ENCODE measurements at regions of chr11 and their contacts with region 1.

Region 1: GRCh38 chr11:34357701-34358257 is at the start of gene ABTB2:
- DNase-seq: peak; percentile 99
- ATAC-seq: peak; percentile 95
- H3K4me3 Mint-ChIP-seq: peak within 1 kb of the TSS; percentile 78
- H3K27ac Mint-ChIP-seq: peak within 1 kb of the TSS; percentile 67
- H3K4me1 Mint-ChIP-seq: peaks cover 28% of the 10 kb centered on the region
- H3K27me3 Mint-ChIP-seq: peaks cover 36% of the 10 kb centered on the region
- total RNA-seq, gene ABTB2: 1.2 TPM

Region 2: DNA sequence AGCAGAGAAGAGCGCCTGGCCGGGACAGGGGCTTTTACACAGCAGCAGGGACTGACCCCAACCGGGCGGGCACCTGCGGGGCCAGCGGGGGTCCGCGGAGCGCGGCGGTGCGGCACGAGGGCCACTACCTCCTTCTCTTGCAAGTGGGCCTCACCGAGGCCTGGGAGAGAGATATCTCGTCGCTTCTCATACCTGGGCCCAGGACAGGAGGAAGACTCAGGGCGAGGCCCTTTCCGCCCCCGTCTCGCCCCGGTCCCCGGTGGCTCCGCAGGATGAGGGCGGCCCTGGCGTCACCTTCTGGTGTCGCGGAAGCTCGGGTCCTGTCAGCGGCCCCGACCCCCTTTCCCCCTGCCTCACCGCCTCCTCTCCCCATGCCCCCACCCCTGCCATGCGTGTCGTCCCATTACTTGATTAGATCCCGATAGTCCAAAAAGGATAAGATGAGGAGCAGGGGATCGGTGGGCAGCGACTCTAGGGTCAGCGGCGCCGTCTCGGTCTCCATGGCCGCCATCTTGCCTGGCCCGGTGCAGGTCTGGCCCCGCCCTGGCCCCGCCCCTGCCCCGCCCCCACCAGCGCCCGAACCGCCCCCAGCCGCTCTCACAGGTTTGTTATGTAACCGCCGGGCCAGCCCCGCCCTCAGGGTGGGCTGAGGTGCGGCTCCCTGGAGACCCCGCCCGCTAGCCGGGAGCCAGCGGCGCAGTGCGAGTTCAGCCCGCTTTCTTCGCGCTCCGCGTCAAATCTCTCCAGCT is 583.6 kb before region 1 on chr11 and contains the start of gene FBXO3:
- CTCF ChIA-PET with region 1: no interaction called
- POLR2A ChIA-PET with region 1: no interaction called
- intact Hi-C with region 1: loop called in 1 of 2 experiments (anchors 1 kb)
- DNase-seq: peak; percentile 87
- ATAC-seq: peak; percentile 85
- H3K4me3 Mint-ChIP-seq: peak within 1 kb of the TSS; percentile 89
- H3K27ac Mint-ChIP-seq: peak within 1 kb of the TSS; percentile 75
- H3K4me1 Mint-ChIP-seq: peaks cover 44% of the 10 kb centered on the region
- H3K27me3 Mint-ChIP-seq: peaks cover 12% of the 10 kb centered on the region
- total RNA-seq, gene FBXO3: 11.4 to 12.2 TPM

Region 3: GRCh38 chr11:33996498-33997454 is 361.0 kb before region 1 on chr11:
- CTCF ChIA-PET with region 1: interaction called, 8 read pairs
- POLR2A ChIA-PET with region 1: no interaction called
- intact Hi-C with region 1: loop called (anchors 1 kb)
- DNase-seq: peak; percentile 84
- ATAC-seq: peak; percentile 99
- H3K4me3 Mint-ChIP-seq: no peak overlapping the region
- H3K27ac Mint-ChIP-seq: no peak overlapping the region
- H3K4me1 Mint-ChIP-seq: peaks cover 9% of the 10 kb centered on the region
- H3K27me3 Mint-ChIP-seq: peaks cover 11% of the 10 kb centered on the region

Region 4: DNA sequence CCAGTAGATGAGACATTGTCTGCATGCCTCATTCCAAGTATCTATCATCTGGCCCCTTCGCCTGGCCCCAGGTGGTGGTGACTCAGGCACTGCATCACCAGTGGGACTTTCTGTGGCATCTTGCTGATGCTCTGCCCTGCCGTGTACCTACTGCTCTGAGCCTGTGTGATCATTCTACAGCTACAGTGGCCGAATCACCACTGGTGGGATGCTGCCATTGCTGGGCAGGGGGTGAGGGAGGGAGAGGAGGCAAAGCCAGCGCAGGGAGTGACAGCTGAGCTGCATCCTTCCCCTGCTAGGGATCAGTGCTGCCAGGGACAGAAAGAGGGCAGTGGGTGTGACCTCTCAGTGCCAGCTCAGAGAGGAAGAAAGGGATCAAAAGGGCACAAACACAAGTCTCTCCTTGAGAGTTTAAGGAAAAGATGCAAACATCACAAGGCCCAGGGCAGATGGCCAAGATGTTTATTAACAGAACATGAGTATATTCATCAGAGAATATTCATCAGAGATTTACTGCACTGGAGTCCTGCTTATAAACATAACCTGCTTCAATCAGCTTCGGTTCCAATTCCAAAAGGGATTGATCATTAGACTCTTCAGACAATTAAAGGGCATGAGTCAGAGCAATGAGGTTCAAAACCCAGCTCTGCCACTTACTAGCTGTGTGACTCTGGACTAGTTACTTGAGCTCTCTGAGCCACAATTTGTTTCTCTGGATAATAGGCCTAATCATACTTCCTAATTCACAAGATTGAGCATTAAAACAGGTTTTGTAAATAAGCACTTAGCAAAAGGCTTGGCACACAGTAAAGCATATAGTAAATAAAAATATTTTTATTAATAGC is 142.6 kb before region 1 on chr11:
- CTCF ChIA-PET with region 1: interaction called, 3 read pairs
- POLR2A ChIA-PET with region 1: no interaction called
- intact Hi-C with region 1: loop called in 1 of 2 experiments (anchors 1 kb)
- DNase-seq: peak; percentile 92
- ATAC-seq: peak; percentile 99
- H3K4me3 Mint-ChIP-seq: no peak overlapping the region
- H3K27ac Mint-ChIP-seq: peak overlapping the region; percentile 74
- H3K4me1 Mint-ChIP-seq: peaks cover 22% of the 10 kb centered on the region
- H3K27me3 Mint-ChIP-seq: peaks cover 6% of the 10 kb centered on the region

Region 5: DNA sequence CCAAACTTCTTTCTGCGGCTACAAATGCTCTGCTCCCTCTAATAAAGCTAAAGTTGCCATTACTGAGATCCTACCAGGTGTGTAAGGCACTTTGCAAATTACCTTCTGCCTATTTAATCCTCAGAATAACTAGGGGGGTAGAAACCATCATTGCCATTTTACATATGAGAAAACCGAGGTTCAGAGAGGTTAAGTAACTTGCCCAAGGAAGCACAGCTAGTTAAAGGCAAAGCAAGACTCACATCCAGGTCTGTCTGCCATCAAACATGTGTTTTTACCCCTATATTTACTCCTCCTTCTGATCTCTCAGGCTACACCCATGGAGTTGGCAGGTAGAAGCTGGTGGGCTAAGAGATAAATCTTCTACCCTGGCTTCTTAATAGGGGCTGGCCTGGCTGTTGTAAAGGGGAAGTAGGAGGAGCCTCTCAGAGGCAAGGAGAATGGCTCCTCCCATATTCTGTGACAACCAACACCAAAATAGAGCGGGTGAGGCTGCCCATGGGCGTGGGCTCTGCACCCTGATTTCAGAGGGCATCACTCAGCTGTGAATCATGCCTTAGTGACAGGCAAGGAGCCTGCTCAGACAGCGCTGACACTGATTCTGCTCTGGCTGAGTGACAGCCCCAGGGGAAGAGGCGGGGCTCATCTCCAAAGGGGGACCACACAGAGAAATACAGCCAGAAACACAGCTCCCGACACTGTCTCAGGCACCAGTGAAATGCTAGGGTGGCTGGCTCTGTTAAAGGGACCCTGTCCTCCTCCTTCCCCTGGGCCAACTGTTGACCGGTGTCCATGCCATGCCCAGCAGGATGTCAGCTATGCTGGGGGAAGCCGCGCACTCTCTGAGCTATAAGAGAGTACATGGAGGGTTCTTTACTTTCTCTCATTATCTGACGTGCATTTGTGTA is 106.8 kb before region 1 on chr11:
- CTCF ChIA-PET with region 1: interaction called, 4 read pairs
- POLR2A ChIA-PET with region 1: interaction called, 3 read pairs
- intact Hi-C with region 1: loop called in 1 of 2 experiments (anchors 2 kb)
- DNase-seq: peak; percentile 86
- ATAC-seq: peak; percentile 98
- H3K4me3 Mint-ChIP-seq: no peak overlapping the region
- H3K27ac Mint-ChIP-seq: no peak overlapping the region
- H3K4me1 Mint-ChIP-seq: peaks cover 60% of the 10 kb centered on the region
- H3K27me3 Mint-ChIP-seq: peaks cover 20% of the 10 kb centered on the region

Region 6: DNA sequence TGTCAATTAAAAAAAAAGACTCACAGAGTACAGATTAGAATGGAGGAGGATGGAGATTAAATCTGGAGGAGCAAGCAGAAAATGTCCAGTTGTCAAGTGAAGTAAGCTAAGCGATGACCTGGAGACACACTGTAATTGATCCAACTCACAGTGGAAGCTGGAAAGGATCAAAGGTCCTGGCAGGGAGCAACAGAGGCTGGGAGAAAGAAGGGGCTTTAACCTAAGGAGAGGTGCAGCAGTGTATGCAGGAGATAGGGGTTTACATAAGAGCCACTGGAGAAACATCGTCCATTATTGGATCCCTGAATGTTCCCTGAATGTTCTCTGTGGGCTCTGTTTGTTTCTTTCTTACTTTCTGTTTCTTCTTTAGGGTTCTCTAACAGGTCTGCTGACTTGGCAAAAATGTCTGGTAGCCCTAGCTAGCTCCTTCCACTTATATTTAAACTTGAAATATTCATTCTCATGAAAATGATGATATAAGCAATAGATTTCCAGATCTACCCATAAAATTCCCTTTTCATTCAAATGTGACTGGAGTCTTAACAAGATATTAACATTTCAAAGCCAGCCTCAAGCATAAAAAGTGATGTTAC is 50.9 kb after region 1 on chr11:
- CTCF ChIA-PET with region 1: no interaction called
- POLR2A ChIA-PET with region 1: no interaction called
- intact Hi-C with region 1: no loop called
- DNase-seq: no peak
- ATAC-seq: no peak
- H3K4me3 Mint-ChIP-seq: no peak overlapping the region
- H3K27ac Mint-ChIP-seq: no peak overlapping the region
- H3K4me1 Mint-ChIP-seq: peaks cover 17% of the 10 kb centered on the region
- H3K27me3 Mint-ChIP-seq: peaks cover 17% of the 10 kb centered on the region

Region 7: GRCh38 chr11:34419155-34419554 is 61.4 kb after region 1 on chr11:
- CTCF ChIA-PET with region 1: no interaction called
- POLR2A ChIA-PET with region 1: no interaction called
- intact Hi-C with region 1: no loop called
- DNase-seq: no peak
- ATAC-seq: no peak
- H3K4me3 Mint-ChIP-seq: no peak overlapping the region
- H3K27ac Mint-ChIP-seq: no peak overlapping the region
- H3K4me1 Mint-ChIP-seq: peaks cover 2% of the 10 kb centered on the region
- H3K27me3 Mint-ChIP-seq: peaks cover 20% of the 10 kb centered on the region

Region 8: GRCh38 chr11:34468209-34468841 is 110.5 kb after region 1 on chr11:
- CTCF ChIA-PET with region 1: interaction called, 15 read pairs
- POLR2A ChIA-PET with region 1: no interaction called
- intact Hi-C with region 1: loop called in 1 of 2 experiments (anchors 2 kb)
- DNase-seq: peak; percentile 68
- ATAC-seq: peak; percentile 66
- H3K4me3 Mint-ChIP-seq: no peak overlapping the region
- H3K27ac Mint-ChIP-seq: no peak overlapping the region
- H3K4me1 Mint-ChIP-seq: peaks cover 4% of the 10 kb centered on the region
- H3K27me3 Mint-ChIP-seq: no peaks in the 10 kb centered on the region

Measured in activated CD4-positive, alpha-beta T cell treated with anti-CD3 and anti-CD28 coated beads for 36 hours (primary cell).